CD4-positive, alpha-beta T cell (primary cell): ENCODE measurements at regions of chr4 and their contacts with region 1.

Region 1: DNA sequence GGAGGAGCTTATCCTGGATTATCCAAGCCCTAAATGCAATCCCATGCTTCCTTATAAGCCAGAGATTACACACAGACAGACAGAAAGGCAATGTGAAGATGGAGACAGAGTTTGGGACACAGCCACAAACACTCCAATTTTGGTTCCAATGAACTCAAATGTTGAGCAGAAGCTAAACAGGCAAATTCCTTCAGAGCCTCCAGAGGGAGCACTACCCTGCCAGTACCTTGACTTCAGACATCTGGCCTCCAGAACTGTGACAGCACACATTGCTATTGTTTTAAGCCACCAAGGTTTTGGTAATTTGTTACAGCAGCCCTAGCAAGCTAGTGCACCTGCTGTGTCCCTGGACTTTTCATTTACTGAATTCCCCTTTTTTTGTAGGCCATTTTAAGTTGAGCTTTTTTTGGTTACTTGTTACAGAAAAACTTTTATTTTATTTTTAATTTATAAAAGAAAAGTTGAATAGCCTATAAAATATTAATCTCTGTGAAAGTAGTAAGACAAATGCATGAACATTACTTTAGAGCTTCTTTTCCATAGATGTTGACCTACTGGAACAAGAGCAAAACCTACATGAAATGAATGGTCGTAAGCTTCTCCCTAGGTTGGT is 33.4 kb upstream of the SRD5A3 start:
- DNase-seq: peak in 11 of 14 experiments; percentile 3 to 66 (median 19)
- ATAC-seq: peak; percentile 39
- H3K4me3 ChIP-seq: no peak overlapping the region
- H3K4me3 Mint-ChIP-seq: no peak overlapping the region
- H3K27ac ChIP-seq: no peak overlapping the region
- H3K27ac Mint-ChIP-seq: no peak overlapping the region
- H3K4me1 ChIP-seq: no peaks in the 10 kb centered on the region
- H3K4me1 Mint-ChIP-seq: no peaks in the 10 kb centered on the region
- H3K27me3 ChIP-seq: no peaks in the 10 kb centered on the region
- H3K27me3 Mint-ChIP-seq: no peaks in the 10 kb centered on the region
- CTCF ChIP-seq: peak; percentile 66

Region 2: GRCh38 chr4:55554453-55555030 is 241.9 kb after region 1 on chr4:
- CTCF ChIA-PET with region 1: interaction called, 4 read pairs
- POLR2A ChIA-PET with region 1: no interaction called
- intact Hi-C with region 1: loop called (anchors 2 to 10 kb)
- DNase-seq: peak in 4 of 14 experiments; percentile 10 to 65 (median 62)
- ATAC-seq: peak; percentile 55
- H3K4me3 ChIP-seq: no peak overlapping the region
- H3K4me3 Mint-ChIP-seq: no peak overlapping the region
- H3K27ac ChIP-seq: no peak overlapping the region
- H3K27ac Mint-ChIP-seq: no peak overlapping the region
- H3K4me1 ChIP-seq: no peaks in the 10 kb centered on the region
- H3K4me1 Mint-ChIP-seq: no peaks in the 10 kb centered on the region
- H3K27me3 ChIP-seq: no peaks in the 10 kb centered on the region
- H3K27me3 Mint-ChIP-seq: peaks cover 4% of the 10 kb centered on the region
- CTCF ChIP-seq: peak; percentile 78